ENCODE measurements at regions of chr7 and their contacts with region 1.

Region 1: GRCh38 chr7:36670585-36671431 is 53.5 kb downstream of the AOAH start:
- DNase-seq: peak; percentile 43 to 88 (median 72)
- ATAC-seq: peak; percentile 94
- H3K4me3 ChIP-seq: no peak overlapping the region
- H3K4me3 Mint-ChIP-seq: peak overlapping the region; percentile 16
- H3K27ac ChIP-seq: no peak overlapping the region
- H3K27ac Mint-ChIP-seq: peak overlapping the region; percentile 73
- H3K4me1 ChIP-seq: peaks cover 20% of the 10 kb centered on the region
- H3K4me1 Mint-ChIP-seq: peaks cover 39% of the 10 kb centered on the region
- H3K27me3 ChIP-seq: no peaks in the 10 kb centered on the region
- H3K27me3 Mint-ChIP-seq: no peaks in the 10 kb centered on the region
- CTCF ChIP-seq: peak; percentile 89

Region 2: DNA sequence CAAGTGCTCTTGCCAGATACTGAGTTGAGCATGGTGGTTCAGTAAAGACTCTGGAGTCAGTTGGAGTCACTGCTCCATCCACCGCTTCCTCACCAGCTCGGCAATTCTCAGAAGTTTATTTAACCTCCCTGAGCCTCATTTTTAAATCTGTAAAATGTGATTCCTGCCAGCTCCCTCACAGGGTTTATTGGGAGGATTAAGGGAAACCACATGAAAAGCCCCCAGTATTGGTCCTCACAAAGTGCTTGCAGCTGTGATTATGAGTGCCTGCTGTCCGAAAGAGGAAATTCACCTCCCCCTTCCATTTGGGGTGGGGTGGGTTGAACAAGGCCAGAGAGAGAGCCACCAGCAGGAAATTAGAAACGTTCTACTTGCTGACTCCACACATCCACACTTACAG is 45.6 kb before region 1 on chr7:
- CTCF ChIA-PET with region 1: interaction called, 9 read pairs
- POLR2A ChIA-PET with region 1: no interaction called
- intact Hi-C with region 1: loop called in 1 of 2 experiments (anchors 1 kb)
- DNase-seq: no peak
- ATAC-seq: no peak
- H3K4me3 ChIP-seq: no peak overlapping the region
- H3K4me3 Mint-ChIP-seq: no peak overlapping the region
- H3K27ac ChIP-seq: peak overlapping the region in 1 of 2 experiments; percentile 58
- H3K27ac Mint-ChIP-seq: peak overlapping the region; percentile 46
- H3K4me1 ChIP-seq: peaks cover 8% of the 10 kb centered on the region
- H3K4me1 Mint-ChIP-seq: peaks cover 42% of the 10 kb centered on the region
- H3K27me3 ChIP-seq: no peaks in the 10 kb centered on the region
- H3K27me3 Mint-ChIP-seq: no peaks in the 10 kb centered on the region
- CTCF ChIP-seq: no peak

Region 3: DNA sequence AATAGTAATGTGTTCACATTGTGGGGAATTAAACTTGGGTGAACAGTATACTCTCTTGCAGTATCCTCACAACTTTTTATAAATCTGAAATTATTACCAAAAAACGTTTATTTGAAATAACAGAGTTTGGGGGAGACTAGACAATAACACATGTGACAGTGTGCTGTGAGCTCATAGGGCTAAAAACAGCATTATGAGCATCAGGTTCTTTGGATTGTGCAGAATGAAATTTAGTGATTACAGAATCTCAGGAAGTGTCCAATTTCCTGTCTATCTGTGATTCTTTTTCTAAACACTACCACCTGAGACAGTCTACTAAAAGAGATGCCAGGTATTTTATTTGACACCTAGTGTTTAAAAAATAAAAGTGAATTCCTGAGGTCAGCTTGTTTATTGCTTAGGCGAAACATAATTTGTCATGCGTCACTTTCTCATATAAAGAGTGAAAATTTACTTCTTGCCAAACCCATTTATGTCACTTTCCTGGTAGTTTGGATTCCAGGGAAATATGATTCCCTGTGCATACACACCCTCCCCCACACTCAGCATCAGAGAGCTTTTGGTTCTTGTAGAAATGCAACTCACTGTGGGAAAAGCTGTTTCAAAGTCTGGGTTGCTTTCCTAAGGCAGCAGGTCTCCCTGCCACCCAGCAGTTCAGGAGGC is 17.7 kb before region 1 on chr7:
- CTCF ChIA-PET with region 1: interaction called, 27 read pairs
- POLR2A ChIA-PET with region 1: no interaction called
- intact Hi-C with region 1: loop called in 1 of 2 experiments (anchors 2 kb)
- DNase-seq: no peak
- ATAC-seq: no peak
- H3K4me3 ChIP-seq: no peak overlapping the region
- H3K4me3 Mint-ChIP-seq: no peak overlapping the region
- H3K27ac ChIP-seq: peak overlapping the region in 1 of 2 experiments; percentile 20
- H3K27ac Mint-ChIP-seq: peak overlapping the region; percentile 77
- H3K4me1 ChIP-seq: peaks cover 14% of the 10 kb centered on the region
- H3K4me1 Mint-ChIP-seq: peaks cover 64% of the 10 kb centered on the region
- H3K27me3 ChIP-seq: no peaks in the 10 kb centered on the region
- H3K27me3 Mint-ChIP-seq: no peaks in the 10 kb centered on the region
- CTCF ChIP-seq: no peak

Region 4: DNA sequence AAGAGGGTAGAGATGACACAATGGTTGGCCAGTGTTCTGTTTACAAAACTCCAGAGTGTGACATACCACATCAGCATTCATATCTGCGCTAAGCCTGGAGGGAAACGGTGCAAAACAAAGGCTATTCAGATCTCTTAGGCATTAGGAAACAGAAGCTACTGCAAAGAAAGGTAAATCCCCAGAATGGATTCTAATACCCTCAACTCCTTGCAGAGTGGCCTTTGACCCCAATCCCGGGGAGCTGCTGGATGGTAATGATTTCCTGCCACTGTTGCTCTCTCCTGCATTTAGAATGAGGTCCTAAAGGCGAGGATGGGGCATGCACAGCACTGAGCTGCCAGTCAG is 11.7 kb before region 1 on chr7:
- CTCF ChIA-PET with region 1: interaction called, 27 read pairs
- POLR2A ChIA-PET with region 1: no interaction called
- intact Hi-C with region 1: no loop called
- DNase-seq: no peak
- ATAC-seq: no peak
- H3K4me3 ChIP-seq: no peak overlapping the region
- H3K4me3 Mint-ChIP-seq: no peak overlapping the region
- H3K27ac ChIP-seq: peak overlapping the region in 1 of 2 experiments; percentile 52
- H3K27ac Mint-ChIP-seq: peak overlapping the region; percentile 42
- H3K4me1 ChIP-seq: peaks cover 7% of the 10 kb centered on the region
- H3K4me1 Mint-ChIP-seq: peaks cover 69% of the 10 kb centered on the region
- H3K27me3 ChIP-seq: no peaks in the 10 kb centered on the region
- H3K27me3 Mint-ChIP-seq: no peaks in the 10 kb centered on the region
- CTCF ChIP-seq: no peak

Region 5: GRCh38 chr7:37141742-37142141 is 470.9 kb after region 1 on chr7:
- CTCF ChIA-PET with region 1: no interaction called
- POLR2A ChIA-PET with region 1: no interaction called
- intact Hi-C with region 1: no loop called
- DNase-seq: no peak
- ATAC-seq: no peak
- H3K4me3 ChIP-seq: no peak overlapping the region
- H3K4me3 Mint-ChIP-seq: no peak overlapping the region
- H3K27ac ChIP-seq: no peak overlapping the region
- H3K27ac Mint-ChIP-seq: no peak overlapping the region
- H3K4me1 ChIP-seq: no peaks in the 10 kb centered on the region
- H3K4me1 Mint-ChIP-seq: peaks cover 10% of the 10 kb centered on the region
- H3K27me3 ChIP-seq: no peaks in the 10 kb centered on the region
- H3K27me3 Mint-ChIP-seq: no peaks in the 10 kb centered on the region
- CTCF ChIP-seq: no peak